ENCODE measurements at regions of chr9 and their contacts with region 1.

Region 1: DNA sequence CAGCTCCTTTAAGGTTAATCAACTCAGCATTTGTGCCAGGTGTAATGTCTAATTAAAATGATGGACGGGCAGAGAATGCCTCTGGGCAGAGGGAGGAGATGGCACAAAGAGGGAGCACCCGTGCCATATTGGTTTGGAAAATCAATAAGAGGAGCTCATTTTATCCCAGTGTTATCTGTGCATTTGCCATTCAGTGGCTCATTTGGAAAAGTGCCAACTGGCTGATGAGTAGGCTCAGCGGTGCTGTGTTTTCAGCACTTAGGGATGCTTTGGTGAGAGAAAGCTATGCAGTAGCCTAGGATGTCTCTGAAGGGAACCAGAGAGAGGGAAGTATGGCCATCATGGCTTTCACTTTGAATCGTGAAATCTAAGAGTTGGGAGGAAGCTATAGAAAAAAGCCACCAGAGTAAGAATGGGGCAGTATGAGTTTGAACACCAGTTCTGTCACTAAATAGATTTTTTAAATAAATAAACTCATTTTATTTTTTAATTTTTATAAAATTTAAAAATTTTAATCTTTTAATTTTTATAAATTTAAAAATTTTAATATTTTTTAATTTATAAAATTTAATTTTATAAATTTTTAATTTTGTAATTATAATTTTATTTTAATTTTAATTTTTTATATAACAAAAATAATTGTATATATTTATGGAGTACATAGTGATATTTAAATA is 472.8 kb downstream of the BRINP1 start:
- DNase-seq: no peak
- ATAC-seq: no peak
- H3K4me3 ChIP-seq: no peak overlapping the region
- H3K27ac ChIP-seq: no peak overlapping the region
- H3K4me1 ChIP-seq: no peaks in the 10 kb centered on the region
- H3K27me3 ChIP-seq: no peaks in the 10 kb centered on the region
- CTCF ChIP-seq: no peak

Region 2: GRCh38 chr9:118961857-118962256 is 65.4 kb after region 1 on chr9:
- intact Hi-C with region 1: loop called in 2 of 10 experiments (anchors 10 kb)
- DNase-seq: no peak
- ATAC-seq: peak in 6 of 8 donors; percentile 63 to 95 (median 76)
- H3K4me3 ChIP-seq: no peak overlapping the region
- H3K27ac ChIP-seq: peak overlapping the region in 4 of 10 donors; percentile 34 to 62 (median 48)
- H3K4me1 ChIP-seq: peaks cover 0 to 11% (median 0%) of the 10 kb centered on the region in 9 donors
- H3K27me3 ChIP-seq: no peaks in the 10 kb centered on the region
- CTCF ChIP-seq: no peak